MCF 10A (cell line): ENCODE measurements at regions of chrX and their contacts with region 1.

Region 1: DNA sequence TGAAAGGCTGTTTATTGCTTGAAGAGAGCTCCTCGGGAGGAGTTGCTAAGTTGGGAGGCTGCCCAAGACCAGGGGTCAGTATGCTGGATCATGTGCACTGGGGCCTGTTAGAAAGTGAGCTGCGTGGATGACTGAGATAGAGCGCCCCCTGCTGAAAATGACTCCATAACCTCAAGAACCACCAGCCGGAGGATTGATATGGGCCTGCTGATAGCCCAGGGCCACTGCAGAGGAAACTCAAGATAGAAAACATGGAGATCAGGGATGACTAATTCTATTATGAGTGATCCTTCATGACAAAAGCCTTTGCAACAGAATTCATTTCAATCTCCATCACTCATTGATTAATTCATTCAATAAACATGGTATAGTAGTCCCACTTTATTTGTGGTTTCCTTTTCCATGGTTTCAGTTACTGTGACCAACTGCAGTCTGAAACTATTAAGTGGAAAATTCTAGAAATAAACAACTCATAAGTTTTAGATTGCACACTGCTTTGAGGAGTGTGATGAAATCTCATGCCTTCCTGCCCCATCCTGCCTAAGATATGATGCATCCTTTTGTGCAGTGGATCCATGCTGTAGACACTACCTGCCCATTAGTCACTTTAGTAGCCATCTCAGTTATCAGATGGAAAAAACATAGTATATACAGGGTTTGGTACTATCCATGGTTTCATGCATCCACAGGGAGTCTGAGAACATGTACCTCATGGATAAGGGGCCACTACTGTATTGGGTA is 126.7 kb upstream of the MBNL3 start:
- DNase-seq: peak; percentile 64
- H3K4me3 Mint-ChIP-seq: no peak overlapping the region
- H3K27ac Mint-ChIP-seq: no peak overlapping the region
- H3K4me1 Mint-ChIP-seq: no peaks in the 10 kb centered on the region
- H3K27me3 Mint-ChIP-seq: peaks cover 59% of the 10 kb centered on the region
- CTCF ChIP-seq: peak; percentile 18

Region 2: DNA sequence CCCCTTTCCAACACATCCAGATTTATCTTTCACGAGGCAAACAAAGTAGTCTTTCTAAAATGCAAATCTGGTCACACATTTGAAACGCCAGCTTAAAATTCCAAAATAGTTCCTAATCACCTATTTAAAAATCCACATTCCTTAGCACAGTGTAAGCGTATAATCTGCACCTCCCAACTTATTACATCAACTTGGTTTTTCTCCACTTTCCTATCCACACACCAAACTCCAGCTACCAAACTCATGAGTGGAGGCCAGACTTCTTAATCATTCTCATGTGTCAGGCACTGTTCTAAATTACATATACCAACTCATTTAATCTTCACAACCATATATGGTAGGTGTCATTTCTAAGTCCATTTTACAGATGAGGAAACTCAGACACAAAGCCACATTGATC is 1746.3 kb before region 1 on chrX:
- CTCF ChIA-PET with region 1: no interaction called
- POLR2A ChIA-PET with region 1: no interaction called
- intact Hi-C with region 1: no loop called
- DNase-seq: no peak
- H3K4me3 Mint-ChIP-seq: no peak overlapping the region
- H3K27ac Mint-ChIP-seq: no peak overlapping the region
- H3K4me1 Mint-ChIP-seq: peaks cover 3% of the 10 kb centered on the region
- H3K27me3 Mint-ChIP-seq: peaks cover 36% of the 10 kb centered on the region
- CTCF ChIP-seq: no peak

Region 3: GRCh38 chrX:131710431-131711045 is 905.0 kb before region 1 on chrX:
- CTCF ChIA-PET with region 1: no interaction called
- POLR2A ChIA-PET with region 1: no interaction called
- intact Hi-C with region 1: loop called (anchors 10 kb)
- DNase-seq: no peak
- H3K4me3 Mint-ChIP-seq: peak overlapping the region; percentile 67
- H3K27ac Mint-ChIP-seq: peak overlapping the region; percentile 49
- H3K4me1 Mint-ChIP-seq: peaks cover 8% of the 10 kb centered on the region
- H3K27me3 Mint-ChIP-seq: peaks cover 26% of the 10 kb centered on the region
- CTCF ChIP-seq: no peak

Region 4: GRCh38 chrX:132219343-132219768 is 396.2 kb before region 1 on chrX and contains the start of gene RAP2C:
- CTCF ChIA-PET with region 1: interaction called, 18 read pairs
- POLR2A ChIA-PET with region 1: interaction called, 4 read pairs
- intact Hi-C with region 1: no loop called
- DNase-seq: peak; percentile 78
- H3K4me3 Mint-ChIP-seq: peak within 1 kb of the TSS; percentile 80
- H3K27ac Mint-ChIP-seq: peak within 1 kb of the TSS; percentile 72
- H3K4me1 Mint-ChIP-seq: peaks cover 7% of the 10 kb centered on the region
- H3K27me3 Mint-ChIP-seq: peaks cover 66% of the 10 kb centered on the region
- CTCF ChIP-seq: peak; percentile 48
- total RNA-seq, gene RAP2C: 36.3 and 37.0 TPM in 2 replicates

Region 5: DNA sequence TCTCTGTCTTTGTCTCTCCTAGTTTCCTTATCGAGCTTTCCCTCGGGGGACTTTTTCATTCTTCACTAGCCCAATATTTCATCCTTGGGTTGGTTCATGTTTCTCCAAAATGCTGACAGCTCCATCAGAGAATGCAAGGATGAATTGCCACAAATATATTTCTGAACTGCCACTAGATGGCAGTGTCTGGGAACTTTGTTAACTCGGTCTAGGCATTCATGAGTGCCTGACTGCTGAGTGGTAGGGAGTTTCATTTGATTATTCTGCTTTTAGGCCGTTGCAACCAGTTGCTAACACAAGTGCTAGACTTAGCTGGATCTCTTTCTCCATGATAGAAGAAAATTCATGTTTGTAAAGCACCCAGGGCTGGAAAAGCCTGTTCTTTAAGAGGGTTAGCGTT is 322.8 kb before region 1 on chrX:
- CTCF ChIA-PET with region 1: interaction called, 52 read pairs
- POLR2A ChIA-PET with region 1: no interaction called
- intact Hi-C with region 1: loop called (anchors 1 kb)
- DNase-seq: peak; percentile 67
- H3K4me3 Mint-ChIP-seq: no peak overlapping the region
- H3K27ac Mint-ChIP-seq: no peak overlapping the region
- H3K4me1 Mint-ChIP-seq: no peaks in the 10 kb centered on the region
- H3K27me3 Mint-ChIP-seq: peaks cover 27% of the 10 kb centered on the region
- CTCF ChIP-seq: peak; percentile 45

Region 6: GRCh38 chrX:132592880-132593279 is 22.7 kb before region 1 on chrX:
- CTCF ChIA-PET with region 1: interaction called, 10 read pairs
- POLR2A ChIA-PET with region 1: no interaction called
- intact Hi-C with region 1: no loop called
- DNase-seq: no peak
- H3K4me3 Mint-ChIP-seq: no peak overlapping the region
- H3K27ac Mint-ChIP-seq: no peak overlapping the region
- H3K4me1 Mint-ChIP-seq: no peaks in the 10 kb centered on the region
- H3K27me3 Mint-ChIP-seq: peaks cover 74% of the 10 kb centered on the region
- CTCF ChIP-seq: peak; percentile 18

Region 7: DNA sequence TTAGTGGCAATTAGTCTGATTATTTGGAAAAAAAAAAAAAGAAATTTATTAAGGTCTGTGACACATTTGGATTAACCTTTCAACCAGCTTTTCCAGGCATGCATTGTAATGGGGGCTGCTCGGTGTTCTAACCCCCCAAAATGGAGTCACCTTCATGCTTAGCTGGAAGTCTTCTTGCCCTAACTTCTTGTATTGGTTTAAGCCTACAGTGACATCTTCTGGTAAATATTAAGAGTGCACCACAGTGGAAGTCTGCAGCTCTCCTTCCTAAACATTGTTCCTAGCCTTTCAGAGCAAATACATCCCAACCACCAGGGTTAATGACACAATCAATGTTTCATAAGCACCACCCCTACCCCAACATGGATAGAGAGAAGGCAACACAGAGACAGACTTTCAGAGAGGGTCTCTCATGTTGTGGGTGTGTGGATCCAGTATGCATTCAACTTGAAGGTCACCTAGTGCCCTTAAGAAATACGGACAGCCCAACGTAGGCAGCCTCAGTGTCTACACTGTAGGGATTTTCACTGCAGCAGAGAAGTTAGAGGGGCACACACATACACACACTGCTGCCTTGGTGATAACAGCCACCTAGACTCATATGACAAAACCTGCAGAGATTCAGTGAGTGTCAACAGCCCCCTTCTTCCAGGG is 16.1 kb after region 1 on chrX:
- CTCF ChIA-PET with region 1: interaction called, 21 read pairs
- POLR2A ChIA-PET with region 1: no interaction called
- intact Hi-C with region 1: no loop called
- DNase-seq: peak; percentile 33
- H3K4me3 Mint-ChIP-seq: no peak overlapping the region
- H3K27ac Mint-ChIP-seq: no peak overlapping the region
- H3K4me1 Mint-ChIP-seq: no peaks in the 10 kb centered on the region
- H3K27me3 Mint-ChIP-seq: peaks cover 63% of the 10 kb centered on the region
- CTCF ChIP-seq: peak; percentile 38

Region 8: GRCh38 chrX:132704769-132705168 is 89.2 kb after region 1 on chrX:
- CTCF ChIA-PET with region 1: no interaction called
- POLR2A ChIA-PET with region 1: no interaction called
- intact Hi-C with region 1: no loop called
- DNase-seq: no peak
- H3K4me3 Mint-ChIP-seq: no peak overlapping the region
- H3K27ac Mint-ChIP-seq: no peak overlapping the region
- H3K4me1 Mint-ChIP-seq: no peaks in the 10 kb centered on the region
- H3K27me3 Mint-ChIP-seq: peaks cover 52% of the 10 kb centered on the region
- CTCF ChIP-seq: no peak

Region 9: GRCh38 chrX:132858018-132858417 is 242.5 kb after region 1 on chrX:
- CTCF ChIA-PET with region 1: no interaction called
- POLR2A ChIA-PET with region 1: no interaction called
- intact Hi-C with region 1: no loop called
- DNase-seq: peak; percentile 69
- H3K4me3 Mint-ChIP-seq: no peak overlapping the region
- H3K27ac Mint-ChIP-seq: no peak overlapping the region
- H3K4me1 Mint-ChIP-seq: peaks cover 13% of the 10 kb centered on the region
- H3K27me3 Mint-ChIP-seq: peaks cover 21% of the 10 kb centered on the region
- CTCF ChIP-seq: no peak